Naive thymus-derived CD8-positive, alpha-beta T cell (primary cell): ENCODE measurements at regions of chr1 and their contacts with region 1.

Region 1: GRCh38 chr1:66446261-66447001 is 87.5 kb upstream of the SGIP1 start:
- DNase-seq: peak in 8 of 10 donors; percentile 17 to 81 (median 62)
- ATAC-seq: peak; percentile 62 to 71
- H3K4me3 Mint-ChIP-seq: peak overlapping the region; percentile 58 to 81 (median 74)
- H3K27ac Mint-ChIP-seq: peak overlapping the region; percentile 92 to 98 (median 96)
- H3K4me1 Mint-ChIP-seq: peaks cover 15 to 24% (median 23%) of the 10 kb centered on the region in 4 donors
- H3K27me3 Mint-ChIP-seq: peaks cover 0 to 5% (median 1%) of the 10 kb centered on the region in 5 donors

Region 2: DNA sequence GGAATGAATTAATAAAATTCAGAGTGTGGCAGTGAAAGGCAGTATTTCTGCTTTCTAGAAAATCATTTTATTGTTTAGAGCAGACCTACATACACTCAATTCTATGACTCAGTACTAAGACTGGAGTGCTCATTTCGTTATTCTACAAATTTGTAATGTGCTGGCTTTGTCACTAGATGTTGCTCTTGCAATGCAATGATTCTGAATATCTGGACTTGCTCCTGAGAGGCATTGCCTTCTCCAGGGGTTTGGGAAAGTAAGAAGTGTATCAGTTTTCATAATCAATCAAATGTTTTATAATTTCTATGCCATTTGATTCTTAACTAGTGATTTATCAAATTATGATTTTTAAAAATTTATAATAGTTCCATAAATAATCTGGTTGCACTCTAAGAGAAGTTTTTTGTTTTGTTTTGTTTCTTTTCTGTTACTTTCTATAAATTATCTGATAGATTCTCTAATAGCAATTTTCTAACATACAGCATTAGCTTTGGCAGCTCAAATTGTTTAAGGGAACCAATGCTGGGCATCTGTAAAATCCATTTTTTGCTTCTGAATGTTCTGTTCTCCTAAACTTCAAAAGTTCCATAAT is 193.0 kb before region 1 on chr1:
- POLR2A ChIA-PET with region 1: interaction called, 20 read pairs
- DNase-seq: peak in 5 of 10 donors; percentile 6 to 57 (median 52)
- ATAC-seq: peak; percentile 68 to 92
- H3K4me3 Mint-ChIP-seq: no peak overlapping the region
- H3K27ac Mint-ChIP-seq: peak overlapping the region in 2 of 10 donors; percentile 3 to 22
- H3K4me1 Mint-ChIP-seq: peaks cover 8 to 20% (median 16%) of the 10 kb centered on the region in 4 donors
- H3K27me3 Mint-ChIP-seq: no peaks in the 10 kb centered on the region